ENCODE measurements at regions of chr7 and their contacts with region 1.

Region 1: DNA sequence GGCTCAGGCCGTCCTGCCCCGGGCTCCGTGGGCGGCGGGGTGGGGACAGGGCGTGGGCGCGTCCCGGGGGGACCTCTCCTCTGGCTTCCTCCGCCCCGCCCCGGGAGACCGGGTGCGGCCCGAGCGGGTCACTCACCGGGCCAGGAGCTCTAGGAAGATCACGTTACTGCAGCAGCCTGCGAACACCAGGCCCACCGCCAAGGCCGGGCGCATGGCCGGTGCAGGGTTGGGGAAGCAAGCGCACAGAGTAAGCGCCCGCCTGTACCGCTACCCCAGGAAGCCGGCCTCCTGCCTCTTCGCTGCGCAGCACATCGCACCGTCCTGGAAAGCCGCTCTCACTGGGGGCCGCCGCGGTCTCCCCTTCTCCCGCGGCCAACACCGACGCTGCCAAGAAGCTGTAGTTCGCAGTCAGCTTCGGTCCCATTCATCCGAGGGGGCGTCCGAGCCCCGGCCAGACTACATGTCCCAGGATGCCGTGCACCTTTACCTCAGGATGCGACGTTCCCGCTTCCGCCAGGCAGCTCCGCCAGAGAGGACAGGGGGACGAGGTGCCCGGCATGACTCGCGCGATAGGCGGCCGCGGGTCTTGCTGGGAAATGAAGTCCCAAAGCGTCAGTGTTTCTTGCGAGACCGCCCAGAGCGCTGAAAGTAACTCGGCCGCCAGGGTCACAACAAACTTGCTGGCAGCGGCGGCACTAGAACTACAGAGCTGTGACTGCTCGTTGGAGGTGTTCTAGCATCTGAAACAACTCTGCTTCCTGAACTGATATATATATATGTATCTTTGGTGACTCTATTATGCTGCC is at the start of gene SLC35B4:
- DNase-seq: peak; percentile 95 to 100 (median 98)

Region 2: DNA sequence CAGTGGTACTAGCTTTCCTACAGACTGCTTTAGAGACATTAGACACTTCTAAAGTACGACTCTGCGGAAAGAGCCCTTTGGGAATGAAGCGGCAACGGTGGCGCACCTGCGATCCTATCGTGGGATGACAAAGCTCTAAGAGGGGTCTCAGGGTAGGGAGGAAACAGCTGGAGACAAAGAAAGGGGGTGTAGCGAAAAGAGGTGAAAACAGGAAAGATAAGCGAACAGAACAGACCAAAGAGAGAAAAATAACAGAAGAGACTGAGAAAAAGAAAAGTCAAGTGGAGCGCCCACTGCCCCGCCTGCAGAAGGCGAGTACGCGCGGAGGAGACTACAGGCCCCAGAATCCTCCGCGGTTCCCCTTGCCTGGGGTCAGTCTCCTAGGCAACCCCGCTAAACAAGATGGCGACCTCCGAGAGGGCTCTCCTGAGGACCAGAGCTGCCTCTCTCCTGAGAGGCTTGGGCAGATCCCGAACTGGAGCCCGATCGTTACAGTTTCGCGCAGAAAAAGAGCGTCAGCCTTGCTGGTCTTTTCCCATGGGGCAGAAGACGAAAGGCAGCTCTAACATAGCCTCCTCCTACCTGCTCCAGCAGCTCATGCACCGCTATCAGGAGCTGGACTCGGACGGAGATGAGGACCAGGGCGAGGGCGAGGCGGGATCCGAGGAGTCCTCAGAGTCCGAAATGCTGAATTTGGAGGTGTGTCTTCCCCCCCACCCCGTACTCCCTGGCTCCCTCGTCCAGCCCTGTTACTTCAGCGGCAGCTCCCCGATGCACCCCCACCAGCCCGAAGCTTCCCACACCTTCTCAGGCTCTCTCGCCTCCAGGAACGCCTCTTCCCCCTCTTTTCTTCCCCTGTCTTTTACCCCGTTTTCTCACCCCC is 189.5 kb before region 1 on chr7 and contains the start of gene LRGUK:
- intact Hi-C with region 1: loop called (anchors 5 kb)
- DNase-seq: peak; percentile 80 to 98 (median 88)

Region 3: DNA sequence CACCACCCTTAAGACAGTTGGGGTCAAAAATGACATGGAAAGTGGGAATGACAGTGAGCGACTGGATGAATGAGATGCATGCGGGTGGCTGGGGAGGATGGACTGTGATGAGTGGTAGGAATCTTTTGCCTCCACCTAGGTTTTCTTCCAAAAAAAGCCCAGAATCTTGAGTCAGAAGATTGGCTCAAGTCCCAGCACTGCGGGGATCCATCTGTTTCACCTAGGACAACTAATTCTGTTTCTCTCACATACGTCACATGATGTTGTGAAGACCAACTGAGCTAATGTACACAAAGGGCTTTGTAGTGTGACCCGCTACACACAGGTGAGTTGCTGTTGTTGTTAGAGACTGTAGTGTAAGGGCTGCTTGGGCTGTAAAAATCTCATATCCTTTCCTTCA is 58.5 kb after region 1 on chr7:
- intact Hi-C with region 1: no loop called
- DNase-seq: peak in 1 of 10 donors; percentile 27